Activated CD8-positive, alpha-beta T cell treated with anti-CD3 and anti-CD28 coated beads for 36 hours (primary cell): ENCODE measurements at regions of chr11 and their contacts with region 1.

Region 1: DNA sequence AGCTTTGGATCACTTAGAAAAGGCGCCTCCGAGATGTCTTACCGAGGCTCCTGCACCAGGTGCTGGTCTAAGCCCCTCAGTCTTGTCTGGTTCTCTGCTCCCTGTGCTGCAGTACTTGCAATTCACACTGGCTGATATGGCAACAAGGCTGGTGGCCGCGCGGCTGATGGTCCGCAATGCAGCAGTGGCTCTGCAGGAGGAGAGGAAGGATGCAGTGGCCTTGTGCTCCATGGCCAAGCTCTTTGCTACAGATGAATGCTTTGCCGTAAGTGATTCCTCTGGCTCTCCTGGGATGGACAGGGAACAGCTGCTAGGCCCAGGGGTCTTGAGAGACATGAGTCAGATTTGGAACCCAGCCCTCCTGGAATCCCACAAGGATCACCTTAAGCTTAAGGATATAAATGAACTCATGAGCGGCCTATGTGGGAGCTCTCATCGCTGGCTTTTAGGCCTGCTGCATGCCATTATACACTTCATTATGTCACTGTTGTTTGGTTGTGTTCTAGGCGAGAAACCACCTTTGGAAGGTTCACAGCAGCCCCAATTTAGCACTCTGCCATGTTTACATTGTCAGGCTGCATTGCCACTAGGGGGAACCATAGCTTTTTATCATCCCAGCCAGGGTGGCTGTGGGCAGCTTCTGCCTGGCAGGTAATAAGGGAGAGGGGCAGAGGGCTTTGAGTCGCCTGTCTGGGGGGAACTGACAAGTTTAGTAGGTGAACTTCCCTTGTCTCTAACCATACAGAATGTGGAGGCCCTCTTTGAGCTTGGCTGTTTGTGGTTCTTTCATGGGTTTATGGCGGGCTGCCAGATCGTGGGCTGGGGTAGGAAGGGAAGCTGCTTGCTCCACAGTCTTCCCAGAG is 8.5 kb downstream of the ACAD8 start:
- DNase-seq: peak; percentile 51
- ATAC-seq: peak; percentile 87
- H3K4me3 Mint-ChIP-seq: no peak overlapping the region
- H3K27ac Mint-ChIP-seq: no peak overlapping the region
- H3K4me1 Mint-ChIP-seq: no peaks in the 10 kb centered on the region
- H3K27me3 Mint-ChIP-seq: no peaks in the 10 kb centered on the region
- CTCF ChIP-seq: peak; percentile 32

Region 2: DNA sequence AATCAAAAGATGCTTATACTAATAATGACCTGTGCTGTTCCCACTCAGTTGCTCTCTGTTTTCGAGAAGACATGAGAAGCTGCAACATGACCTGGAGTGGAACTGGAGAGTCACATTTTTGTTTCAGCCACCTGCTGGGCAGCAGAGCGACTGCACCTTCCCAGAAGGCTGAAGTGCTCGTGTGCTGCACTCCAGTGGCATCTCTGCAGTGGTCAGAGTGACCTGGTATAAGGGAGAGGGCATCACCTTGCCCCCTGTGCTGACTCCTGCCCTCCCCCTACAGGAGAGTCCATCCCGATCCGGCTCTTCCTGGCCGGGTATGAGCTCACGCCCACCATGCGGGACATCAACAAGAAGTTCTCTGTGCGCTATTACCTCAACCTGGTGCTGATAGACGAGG is 17.2 kb before region 1 on chr11:
- CTCF ChIA-PET with region 1: interaction called, 12 read pairs
- POLR2A ChIA-PET with region 1: no interaction called
- intact Hi-C with region 1: no loop called
- DNase-seq: no peak
- ATAC-seq: peak; percentile 50
- H3K4me3 Mint-ChIP-seq: no peak overlapping the region
- H3K27ac Mint-ChIP-seq: no peak overlapping the region
- H3K4me1 Mint-ChIP-seq: peaks cover 10% of the 10 kb centered on the region
- H3K27me3 Mint-ChIP-seq: no peaks in the 10 kb centered on the region
- CTCF ChIP-seq: peak; percentile 61

Region 3: GRCh38 chr11:134313821-134314607 is 52.2 kb after region 1 on chr11:
- CTCF ChIA-PET with region 1: no interaction called
- POLR2A ChIA-PET with region 1: no interaction called
- intact Hi-C with region 1: no loop called
- DNase-seq: no peak
- ATAC-seq: no peak
- H3K4me3 Mint-ChIP-seq: no peak overlapping the region
- H3K27ac Mint-ChIP-seq: no peak overlapping the region
- H3K4me1 Mint-ChIP-seq: no peaks in the 10 kb centered on the region
- H3K27me3 Mint-ChIP-seq: peaks cover 3% of the 10 kb centered on the region
- CTCF ChIP-seq: no peak

Region 4: DNA sequence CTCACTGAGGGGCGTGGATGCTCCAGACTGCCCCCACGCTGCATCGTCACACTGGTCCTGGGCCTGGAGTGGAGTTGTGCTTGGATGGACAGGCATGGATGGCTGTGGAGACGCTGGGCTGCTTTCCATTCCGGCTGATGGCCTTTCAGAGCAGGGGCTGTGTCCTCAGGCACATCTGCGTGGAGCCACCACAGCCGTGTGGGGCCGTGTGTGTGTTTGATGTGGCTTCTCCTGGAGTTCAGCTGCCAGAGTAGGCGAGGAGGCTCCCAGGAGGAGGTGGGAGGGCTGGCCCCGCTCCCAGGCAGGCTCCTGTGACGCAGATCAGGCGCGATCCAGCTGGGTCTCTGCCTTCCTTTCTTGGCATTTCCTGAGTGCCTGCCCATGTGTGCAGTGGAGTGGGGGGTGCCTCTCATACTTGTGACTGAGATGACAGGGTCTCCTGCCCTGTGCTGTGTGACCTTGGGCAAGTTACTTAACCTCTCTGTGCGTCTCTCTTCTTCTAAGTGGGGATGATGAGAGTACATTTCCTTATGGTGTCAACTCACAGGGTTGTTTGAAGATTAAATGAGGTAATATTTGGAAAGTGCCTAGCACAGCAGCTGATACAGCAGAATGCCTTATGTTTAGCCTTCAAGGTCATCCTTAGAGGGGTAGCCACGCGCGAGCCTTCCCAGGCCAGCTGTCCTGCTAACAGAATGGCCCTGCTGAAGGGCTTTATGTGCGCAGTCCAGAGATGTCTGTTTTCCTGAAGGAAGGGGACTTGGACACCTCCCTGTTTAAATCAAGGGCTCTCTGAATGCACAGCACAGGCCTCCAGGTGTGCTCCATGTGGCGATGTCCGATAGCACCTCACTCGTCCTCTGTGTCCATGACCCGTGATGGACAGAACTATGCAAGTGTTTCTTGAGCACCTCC is 103.4 kb after region 1 on chr11:
- CTCF ChIA-PET with region 1: no interaction called
- POLR2A ChIA-PET with region 1: no interaction called
- intact Hi-C with region 1: no loop called
- DNase-seq: no peak
- ATAC-seq: no peak
- H3K4me3 Mint-ChIP-seq: no peak overlapping the region
- H3K27ac Mint-ChIP-seq: no peak overlapping the region
- H3K4me1 Mint-ChIP-seq: peaks cover 4% of the 10 kb centered on the region
- H3K27me3 Mint-ChIP-seq: peaks cover 2% of the 10 kb centered on the region
- CTCF ChIP-seq: no peak